ENCODE measurements at regions of chr20 and their contacts with region 1.

Region 1: DNA sequence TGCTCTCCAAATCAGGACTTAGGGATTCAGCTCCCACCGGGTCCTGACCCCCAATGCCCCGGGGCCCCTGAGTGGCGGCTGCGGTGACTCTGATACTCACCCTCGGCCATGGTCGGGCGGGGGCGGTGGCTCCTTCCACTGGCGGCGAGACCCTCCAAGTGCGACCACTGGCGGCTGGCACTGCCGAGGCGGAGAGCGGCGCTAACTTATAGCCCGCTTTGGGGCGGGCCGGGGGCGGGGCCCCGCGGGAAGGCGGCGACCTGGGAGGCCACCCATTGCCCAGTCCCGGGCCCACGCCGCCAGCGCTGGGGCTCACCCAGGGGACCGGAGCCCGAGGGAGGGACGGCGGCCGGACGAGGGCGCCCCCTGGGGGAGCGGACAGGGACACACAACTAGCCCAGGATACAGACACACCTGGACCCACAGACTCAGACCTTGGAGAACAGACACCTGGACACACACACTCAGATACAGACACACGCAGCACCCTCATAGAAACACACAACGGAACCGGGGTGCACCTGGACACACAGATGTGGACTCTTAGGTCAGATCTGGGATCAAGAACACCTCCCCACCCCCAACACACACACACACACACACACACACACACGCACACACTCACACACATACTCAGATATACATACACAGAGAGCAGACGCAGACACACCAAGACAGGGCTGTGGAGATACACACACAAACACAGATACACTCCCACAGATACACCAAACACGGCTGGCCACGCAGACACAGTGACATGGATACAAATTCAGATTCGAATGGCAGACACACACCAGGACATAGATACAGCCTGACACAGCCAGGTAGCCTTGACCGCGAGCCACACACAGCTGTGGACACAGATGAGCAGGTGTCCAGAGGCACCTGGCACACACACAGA is at the start of gene TGM2:
- DNase-seq: peak; percentile 85
- H3K4me3 ChIP-seq: peak within 1 kb of the TSS; percentile 18 to 45 (median 34)
- H3K27ac ChIP-seq: peak within 1 kb of the TSS; percentile 27 to 72 (median 59)
- H3K4me1 ChIP-seq: peaks cover 5 to 29% (median 10%) of the 10 kb centered on the region in 4 donors
- H3K27me3 ChIP-seq: no peaks in the 10 kb centered on the region
- CTCF ChIP-seq: peak; percentile 87 to 95 (median 88)
- EP300 ChIP-seq: no peak
- POLR2A ChIP-seq: no peak
- total RNA-seq, gene TGM2: 14.2 to 52.0 (median 21.7) TPM

Region 2: DNA sequence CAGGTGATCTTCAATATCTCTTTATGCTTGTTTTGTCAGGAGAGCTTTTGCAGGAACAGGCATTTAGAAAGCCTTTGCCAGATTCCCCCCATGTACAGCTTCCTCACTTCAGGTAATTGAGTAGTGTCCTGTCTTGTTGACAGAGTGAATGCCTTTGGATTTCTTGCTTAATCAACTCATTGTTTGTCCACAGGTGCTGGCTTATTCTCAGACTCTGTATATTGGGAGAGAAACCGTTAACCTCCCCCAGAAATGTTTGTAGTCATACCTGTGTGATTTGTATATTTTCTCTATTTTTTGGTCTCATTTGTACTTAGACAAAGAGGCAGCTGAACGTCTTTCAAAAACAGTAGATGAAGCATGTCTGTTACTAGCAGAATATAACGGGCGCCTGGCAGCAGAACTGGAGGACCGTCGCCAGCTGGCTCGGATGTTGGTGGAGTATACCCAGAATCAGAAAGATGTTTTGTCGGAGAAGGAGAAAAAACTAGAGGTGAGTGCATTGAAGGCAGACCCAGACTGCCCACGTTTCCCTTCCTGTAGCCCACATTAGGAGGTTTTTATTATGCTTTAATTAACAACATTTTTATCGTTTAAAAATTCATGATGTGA is 99.5 kb before region 1 on chr20:
- in situ Hi-C with region 1: loop called (anchors 5 to 25 kb)
- intact Hi-C with region 1: no loop called
- DNase-seq: no peak
- H3K4me3 ChIP-seq: no peak overlapping the region
- H3K27ac ChIP-seq: no peak overlapping the region
- H3K4me1 ChIP-seq: no peaks in the 10 kb centered on the region
- H3K27me3 ChIP-seq: no peaks in the 10 kb centered on the region
- CTCF ChIP-seq: no peak
- EP300 ChIP-seq: no peak
- POLR2A ChIP-seq: no peak

Region 3: DNA sequence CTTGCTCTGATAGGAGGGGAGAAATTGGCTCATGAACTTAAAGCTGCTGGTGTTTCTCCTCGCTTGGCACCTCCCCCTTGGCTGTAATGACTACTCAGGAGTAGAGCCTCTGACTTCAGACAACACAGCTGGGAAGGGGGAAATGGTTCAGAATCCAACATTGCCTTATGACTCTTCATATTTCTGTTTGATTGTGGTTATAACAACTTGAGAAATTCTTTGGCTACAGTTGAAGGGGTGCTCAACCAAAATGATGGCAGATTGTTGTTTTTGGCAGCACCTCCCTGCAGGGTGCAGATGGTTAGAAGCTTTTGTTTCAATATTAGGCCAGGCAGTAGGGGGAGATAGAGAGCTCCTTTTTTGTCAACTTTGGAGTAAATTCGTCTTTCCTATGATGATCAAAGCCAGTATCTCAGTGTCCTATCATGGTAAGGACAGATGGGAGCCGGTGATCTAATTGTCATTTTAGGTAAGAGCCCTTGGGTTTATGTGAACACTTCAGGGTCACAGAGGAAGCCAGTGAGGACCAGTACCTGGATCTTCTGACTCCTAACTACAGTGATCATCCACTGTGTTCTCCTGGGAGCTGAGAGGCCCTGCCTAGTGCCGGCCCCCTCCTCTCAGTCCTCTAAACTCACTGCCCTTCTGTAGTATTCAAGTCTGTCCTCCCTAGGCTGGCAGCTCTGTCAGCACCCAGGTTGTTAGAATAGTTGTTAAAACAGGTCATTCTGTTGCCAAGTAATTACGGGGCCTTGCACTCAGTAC is 91.8 kb before region 1 on chr20:
- in situ Hi-C with region 1: loop called (anchors 5 to 25 kb)
- intact Hi-C with region 1: loop called (anchors 2 kb)
- DNase-seq: peak; percentile 29
- H3K4me3 ChIP-seq: no peak overlapping the region
- H3K27ac ChIP-seq: peak overlapping the region; percentile 66 to 79 (median 70)
- H3K4me1 ChIP-seq: peaks cover 17 to 47% (median 25%) of the 10 kb centered on the region in 4 donors
- H3K27me3 ChIP-seq: no peaks in the 10 kb centered on the region
- CTCF ChIP-seq: peak; percentile 71 to 89 (median 81)
- EP300 ChIP-seq: no peak
- POLR2A ChIP-seq: no peak

Region 4: GRCh38 chr20:38590676-38591471 is 425.5 kb after region 1 on chr20:
- in situ Hi-C with region 1: no loop called
- intact Hi-C with region 1: no loop called
- DNase-seq: no peak
- H3K4me3 ChIP-seq: no peak overlapping the region
- H3K27ac ChIP-seq: no peak overlapping the region
- H3K4me1 ChIP-seq: no peaks in the 10 kb centered on the region
- H3K27me3 ChIP-seq: no peaks in the 10 kb centered on the region
- CTCF ChIP-seq: no peak
- EP300 ChIP-seq: no peak
- POLR2A ChIP-seq: no peak